PC-9 (cell line): ENCODE measurements at regions of chr1 and their contacts with region 1.

Region 1: GRCh38 chr1:200400556-200400955 is 9.3 kb downstream of the ZNF281 start:
- DNase-seq: no peak
- H3K4me3 ChIP-seq: no peak overlapping the region
- H3K27ac ChIP-seq: no peak overlapping the region
- H3K4me1 ChIP-seq: peaks cover 8% of the 10 kb centered on the region
- H3K27me3 ChIP-seq: no peaks in the 10 kb centered on the region
- CTCF ChIP-seq: no peak

Region 2: GRCh38 chr1:200336111-200336845 is 64.3 kb before region 1 on chr1:
- CTCF ChIA-PET with region 1: no interaction called
- POLR2A ChIA-PET with region 1: no interaction called
- intact Hi-C with region 1: no loop called
- DNase-seq: peak; percentile 26 to 92
- H3K4me3 ChIP-seq: peak overlapping the region; percentile 8; the same call in 1 of the 2 replicates
- H3K27ac ChIP-seq: peak overlapping the region; percentile 92
- H3K4me1 ChIP-seq: peaks cover 43% of the 10 kb centered on the region
- H3K27me3 ChIP-seq: no peaks in the 10 kb centered on the region
- CTCF ChIP-seq: no peak

Region 3: GRCh38 chr1:200423235-200423634 is 22.7 kb after region 1 on chr1:
- CTCF ChIA-PET with region 1: no interaction called
- POLR2A ChIA-PET with region 1: interaction called, 10 read pairs
- intact Hi-C with region 1: no loop called
- DNase-seq: no peak
- H3K4me3 ChIP-seq: no peak overlapping the region
- H3K27ac ChIP-seq: no peak overlapping the region
- H3K4me1 ChIP-seq: peaks cover 8% of the 10 kb centered on the region
- H3K27me3 ChIP-seq: no peaks in the 10 kb centered on the region
- CTCF ChIP-seq: no peak

Region 4: GRCh38 chr1:200738740-200739498 is 338.4 kb after region 1 on chr1 and contains the start of gene CAMSAP2:
- CTCF ChIA-PET with region 1: no interaction called
- POLR2A ChIA-PET with region 1: no interaction called
- intact Hi-C with region 1: no loop called
- DNase-seq: peak; percentile 70 to 88
- H3K4me3 ChIP-seq: peak within 1 kb of the TSS; percentile 99
- H3K27ac ChIP-seq: peak within 1 kb of the TSS; percentile 91
- H3K4me1 ChIP-seq: peaks cover 40% of the 10 kb centered on the region
- H3K27me3 ChIP-seq: no peaks in the 10 kb centered on the region
- CTCF ChIP-seq: no peak
- total RNA-seq, gene CAMSAP2: 27.5 and 40.3 TPM in 2 replicates